WTC11 (cell line): ENCODE measurements at regions of chr14 and their contacts with region 1.

Region 1: DNA sequence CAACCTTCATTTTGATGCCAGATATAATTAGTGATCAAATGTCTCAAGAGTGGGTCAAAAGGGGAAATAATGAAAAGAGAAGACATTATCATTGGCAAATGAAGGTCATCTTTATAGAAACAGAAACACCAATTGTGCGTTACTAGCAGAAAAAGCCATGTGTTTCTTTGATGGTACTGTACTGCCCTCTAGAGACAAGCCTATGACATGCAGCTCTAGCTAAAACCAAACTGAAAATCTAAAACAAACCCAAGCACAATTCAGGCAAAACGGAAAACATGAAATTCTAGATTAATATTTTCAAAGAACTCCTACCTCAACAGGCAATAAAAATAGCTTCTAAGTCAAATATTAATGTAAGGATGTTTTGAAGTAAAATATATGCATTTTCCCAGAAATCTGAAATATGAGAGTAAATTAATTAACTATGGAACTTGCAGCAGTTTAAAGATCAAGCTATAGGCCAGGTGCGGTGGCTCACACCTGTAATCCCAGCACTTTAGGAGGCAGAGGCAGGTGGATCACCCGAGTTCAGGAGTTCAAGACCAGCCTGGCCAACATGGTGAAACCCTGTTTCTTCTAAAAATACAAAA is 115.4 kb downstream of the KLHL28 start:
- DNase-seq: no peak
- ATAC-seq: peak; percentile 67
- H3K4me3 Mint-ChIP-seq: no peak overlapping the region
- H3K27ac Mint-ChIP-seq: no peak overlapping the region
- H3K4me1 Mint-ChIP-seq: peaks cover 7% of the 10 kb centered on the region; the same call in 1 of the 2 replicates
- H3K27me3 Mint-ChIP-seq: no peaks in the 10 kb centered on the region
- CTCF ChIP-seq: peak; percentile 70

Region 2: DNA sequence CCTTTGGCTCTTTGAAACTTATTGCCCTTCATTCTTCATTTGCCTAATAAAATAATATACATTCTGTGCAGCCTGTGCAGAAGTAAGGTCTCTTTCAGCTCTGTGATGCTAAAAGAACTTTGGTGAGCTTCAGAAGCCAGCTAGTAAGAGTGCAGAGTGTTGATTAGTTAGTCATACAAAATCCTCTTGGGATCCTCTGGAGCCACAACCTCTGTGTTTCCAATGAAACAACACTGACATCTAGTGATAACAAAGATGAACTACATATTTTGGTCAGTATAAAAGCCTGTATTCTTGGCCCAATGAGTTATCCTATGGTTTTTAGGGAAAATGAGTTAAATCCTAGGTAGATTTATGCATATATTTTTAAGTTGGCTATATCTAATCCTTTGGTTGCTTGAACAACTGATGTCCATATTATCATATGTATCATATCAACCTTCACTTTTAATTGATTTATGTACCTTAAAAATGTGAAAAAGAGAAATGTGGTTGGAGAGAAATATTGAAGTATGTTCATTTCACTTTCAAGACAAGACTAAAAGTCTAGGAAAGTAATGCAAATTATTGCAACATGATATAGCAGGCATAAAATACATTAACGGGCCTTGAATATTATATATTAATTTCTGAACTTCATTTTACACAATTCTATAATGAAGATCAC is 43.0 kb before region 1 on chr14:
- CTCF ChIA-PET with region 1: interaction called, 10 read pairs
- POLR2A ChIA-PET with region 1: no interaction called
- DNase-seq: no peak
- ATAC-seq: peak; percentile 98
- H3K4me3 Mint-ChIP-seq: no peak overlapping the region
- H3K27ac Mint-ChIP-seq: no peak overlapping the region
- H3K4me1 Mint-ChIP-seq: peaks cover 8% of the 10 kb centered on the region
- H3K27me3 Mint-ChIP-seq: no peaks in the 10 kb centered on the region
- CTCF ChIP-seq: peak; percentile 45

Region 3: GRCh38 chr14:44820230-44820964 is 25.9 kb before region 1 on chr14:
- CTCF ChIA-PET with region 1: interaction called, 10 read pairs
- POLR2A ChIA-PET with region 1: no interaction called
- DNase-seq: peak; percentile 59
- ATAC-seq: peak; percentile 88
- H3K4me3 Mint-ChIP-seq: no peak overlapping the region
- H3K27ac Mint-ChIP-seq: peak overlapping the region; percentile 57; the same call in 1 of the 2 replicates
- H3K4me1 Mint-ChIP-seq: peaks cover 7% of the 10 kb centered on the region
- H3K27me3 Mint-ChIP-seq: no peaks in the 10 kb centered on the region
- CTCF ChIP-seq: no peak